ENCODE measurements at regions of chr1 and their contacts with region 1.

Region 1: DNA sequence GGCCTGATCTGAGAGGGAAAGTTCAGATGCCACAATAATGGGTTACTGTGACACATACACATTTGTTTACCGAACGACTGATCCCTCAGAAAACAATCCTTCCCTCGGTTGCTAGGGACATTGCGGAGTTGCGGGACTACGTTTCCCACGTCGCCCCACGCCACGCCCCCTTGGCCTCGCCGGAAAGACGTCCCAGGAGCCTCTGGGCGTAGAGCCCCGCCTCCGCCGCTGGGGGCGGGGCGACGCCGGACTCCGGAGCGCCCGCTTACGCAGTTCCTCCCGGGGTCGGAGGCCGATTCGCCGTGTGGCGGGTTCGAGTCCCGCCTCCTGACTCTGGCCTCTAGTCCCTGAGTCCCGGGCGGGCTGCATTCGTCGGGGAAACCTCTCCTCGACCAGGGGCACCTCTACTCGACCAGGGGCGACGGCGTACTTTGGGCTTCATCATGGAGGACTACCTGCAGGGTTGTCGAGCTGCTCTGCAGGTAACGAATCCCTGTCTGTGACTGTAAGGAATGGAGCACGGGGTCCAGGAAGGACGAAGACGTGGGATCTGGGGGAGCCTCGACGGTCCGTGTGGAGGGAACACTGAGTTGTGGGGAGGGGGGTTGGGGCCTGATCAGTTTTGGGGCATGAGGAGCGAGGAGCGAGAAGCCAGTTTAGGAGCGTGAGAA is at the start of gene PRUNE1:
- DNase-seq: peak; percentile 95
- H3K4me3 ChIP-seq: peak within 1 kb of the TSS; percentile 89
- H3K27ac ChIP-seq: peak within 1 kb of the TSS; percentile 68
- H3K4me1 ChIP-seq: peaks cover 52% of the 10 kb centered on the region
- H3K27me3 ChIP-seq: no peaks in the 10 kb centered on the region
- CTCF ChIP-seq: no peak
- total RNA-seq, gene PRUNE1: 26.6 and 30.7 TPM in 2 replicates

Region 2: DNA sequence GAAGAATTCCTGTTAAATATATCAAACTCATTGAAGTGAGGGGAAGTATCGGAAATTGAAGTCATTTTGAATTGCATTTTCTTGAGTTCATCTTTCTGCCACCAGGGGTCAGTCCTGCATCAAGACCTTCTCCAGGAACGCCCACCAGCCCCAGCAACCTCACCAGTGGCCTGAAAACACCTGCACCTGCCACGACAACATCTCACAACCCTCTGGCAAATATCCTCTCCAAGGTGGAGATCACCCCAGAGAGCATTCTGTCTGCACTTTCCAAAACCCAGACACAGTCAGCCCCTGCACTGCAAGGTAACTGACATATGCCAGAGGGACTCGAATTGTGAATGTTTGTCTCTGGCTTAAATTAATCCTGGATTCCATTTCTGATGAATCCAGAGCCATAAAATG is 543.9 kb before region 1 on chr1:
- CTCF ChIA-PET with region 1: no interaction called
- POLR2A ChIA-PET with region 1: no interaction called
- intact Hi-C with region 1: loop called (anchors 5 kb)
- DNase-seq: peak; percentile 35 to 49
- H3K4me3 ChIP-seq: no peak overlapping the region
- H3K27ac ChIP-seq: no peak overlapping the region
- H3K4me1 ChIP-seq: no peaks in the 10 kb centered on the region
- H3K27me3 ChIP-seq: no peaks in the 10 kb centered on the region
- CTCF ChIP-seq: peak; percentile 83

Region 3: DNA sequence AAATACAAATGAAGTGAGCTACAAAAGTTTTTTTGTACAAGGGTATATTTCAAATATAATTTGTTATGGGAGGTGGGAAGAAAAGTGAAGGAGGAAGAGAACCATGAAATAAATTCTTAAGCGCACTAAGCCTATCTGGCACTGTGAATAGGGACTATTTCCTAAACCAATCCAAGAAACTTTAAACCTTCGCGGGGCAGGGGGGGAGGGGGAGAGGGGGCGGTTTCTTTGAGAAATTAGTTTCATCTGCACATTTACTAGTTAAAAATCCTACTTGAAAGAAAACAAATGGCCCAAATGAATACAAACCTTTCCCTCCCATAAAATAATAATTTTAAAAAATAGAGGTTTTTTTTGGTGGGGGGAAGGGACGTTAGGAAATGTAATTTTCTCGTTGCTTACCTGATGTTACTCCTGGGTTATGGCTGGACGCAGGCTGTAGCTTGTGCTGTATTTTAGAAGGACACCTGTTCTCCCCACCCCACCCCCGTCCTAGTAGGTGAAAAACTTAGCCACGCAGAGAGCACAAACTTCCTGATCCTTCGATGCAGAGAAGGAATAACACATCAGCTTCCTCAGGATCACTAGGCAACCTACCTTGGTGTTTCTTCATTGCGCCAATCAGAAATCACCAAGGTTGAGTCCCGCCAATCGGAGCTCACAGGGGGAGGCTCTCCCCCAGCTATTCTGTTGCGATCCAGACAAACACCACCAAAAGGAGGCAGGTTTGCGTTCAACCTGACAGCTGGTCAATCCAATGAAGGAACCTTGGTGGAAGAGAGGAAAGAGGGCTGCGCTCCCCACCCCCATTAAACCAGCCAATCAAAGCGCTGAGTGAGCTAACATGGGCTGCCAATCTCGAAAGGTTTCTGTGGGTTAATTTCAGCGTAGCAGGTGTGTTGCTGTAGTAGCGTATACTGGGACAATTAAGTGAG is 311.5 kb before region 1 on chr1 and contains the start of gene GOLPH3L:
- CTCF ChIA-PET with region 1: no interaction called
- POLR2A ChIA-PET with region 1: interaction called, 16 read pairs
- intact Hi-C with region 1: no loop called
- DNase-seq: peak; percentile 95 to 99
- H3K4me3 ChIP-seq: peak within 1 kb of the TSS; percentile 83
- H3K27ac ChIP-seq: peak within 1 kb of the TSS; percentile 40
- H3K4me1 ChIP-seq: peaks cover 10% of the 10 kb centered on the region
- H3K27me3 ChIP-seq: no peaks in the 10 kb centered on the region
- CTCF ChIP-seq: no peak
- total RNA-seq, gene GOLPH3L: 36.5 and 52.7 TPM in 2 replicates

Region 4: GRCh38 chr1:151047925-151048645 is 39.8 kb after region 1 on chr1:
- CTCF ChIA-PET with region 1: no interaction called
- POLR2A ChIA-PET with region 1: interaction called, 4 read pairs
- intact Hi-C with region 1: loop called (anchors 1 kb)
- DNase-seq: peak; percentile 57 to 63
- H3K4me3 ChIP-seq: peak overlapping the region; percentile 66
- H3K27ac ChIP-seq: peak overlapping the region; percentile 9
- H3K4me1 ChIP-seq: peaks cover 5% of the 10 kb centered on the region
- H3K27me3 ChIP-seq: no peaks in the 10 kb centered on the region
- CTCF ChIP-seq: no peak; the same call in 1 of the 2 replicates

Region 5: GRCh38 chr1:151059078-151059907 is 51.0 kb after region 1 on chr1 and contains the start of gene CDC42SE1:
- CTCF ChIA-PET with region 1: interaction called, 10 read pairs
- POLR2A ChIA-PET with region 1: interaction called, 3 read pairs
- intact Hi-C with region 1: loop called (anchors 1 kb)
- DNase-seq: peak; percentile 59 to 74
- H3K4me3 ChIP-seq: peak within 1 kb of the TSS; percentile 82
- H3K27ac ChIP-seq: no peak within 1 kb of the TSS
- H3K4me1 ChIP-seq: peaks cover 43% of the 10 kb centered on the region
- H3K27me3 ChIP-seq: no peaks in the 10 kb centered on the region
- CTCF ChIP-seq: peak; percentile 72
- total RNA-seq, gene CDC42SE1: 59.4 and 62.8 TPM in 2 replicates

Region 6: GRCh38 chr1:151070474-151071276 is 62.4 kb after region 1 on chr1 and contains the start of gene GABPB2:
- CTCF ChIA-PET with region 1: no interaction called
- POLR2A ChIA-PET with region 1: interaction called, 10 read pairs
- intact Hi-C with region 1: no loop called
- DNase-seq: peak; percentile 78 to 85
- H3K4me3 ChIP-seq: peak within 1 kb of the TSS; percentile 84
- H3K27ac ChIP-seq: peak within 1 kb of the TSS; percentile 89
- H3K4me1 ChIP-seq: peaks cover 17% of the 10 kb centered on the region
- H3K27me3 ChIP-seq: no peaks in the 10 kb centered on the region
- CTCF ChIP-seq: peak; percentile 87
- total RNA-seq, gene GABPB2: 6.4 and 6.6 TPM in 2 replicates

Region 7: GRCh38 chr1:151106894-151107293 is 98.6 kb after region 1 on chr1:
- CTCF ChIA-PET with region 1: no interaction called
- POLR2A ChIA-PET with region 1: no interaction called
- intact Hi-C with region 1: no loop called
- DNase-seq: no peak
- H3K4me3 ChIP-seq: no peak overlapping the region
- H3K27ac ChIP-seq: no peak overlapping the region
- H3K4me1 ChIP-seq: no peaks in the 10 kb centered on the region
- H3K27me3 ChIP-seq: no peaks in the 10 kb centered on the region
- CTCF ChIP-seq: no peak

Region 8: DNA sequence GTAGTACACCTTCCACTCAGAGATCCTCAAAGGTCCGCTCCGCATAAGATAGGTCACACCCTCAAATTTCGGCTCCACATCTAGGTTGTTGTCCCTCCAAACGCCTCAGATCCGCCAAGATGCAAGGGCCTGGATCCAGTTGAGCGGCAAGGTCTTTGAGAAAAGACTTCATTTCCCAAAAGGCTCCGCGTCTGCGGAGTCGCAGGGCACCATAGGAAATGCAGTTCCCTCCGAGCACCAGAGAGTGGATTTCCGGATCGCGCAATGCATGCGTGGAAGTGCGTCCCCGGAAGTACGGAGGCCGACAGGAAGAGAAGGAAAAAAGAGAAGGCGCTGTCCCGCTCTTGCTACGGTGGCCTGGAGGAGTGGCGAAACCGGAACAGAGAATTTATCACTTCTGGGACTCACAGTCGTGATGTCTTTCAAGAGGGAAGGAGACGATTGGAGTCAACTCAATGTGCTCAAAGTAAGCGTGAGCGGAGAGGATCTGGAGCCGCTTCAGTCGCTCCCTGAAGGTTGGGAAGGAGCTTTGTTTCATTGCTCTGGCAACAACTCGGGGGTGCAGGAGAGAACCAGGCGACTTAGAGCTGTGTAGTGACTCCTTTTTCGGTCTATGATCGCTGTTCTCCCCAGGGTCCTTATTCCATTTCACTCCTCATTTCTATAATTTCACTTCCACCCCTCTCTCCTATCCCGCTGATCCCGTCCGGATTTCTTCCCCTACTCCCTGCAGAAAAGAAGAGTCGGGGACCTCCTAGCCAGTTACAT is 157.6 kb after region 1 on chr1 and contains the starts of genes LYSMD1 and SCNM1:
- CTCF ChIA-PET with region 1: no interaction called
- POLR2A ChIA-PET with region 1: no interaction called
- intact Hi-C with region 1: loop called (anchors 5 kb)
- DNase-seq: peak; percentile 94 to 96
- H3K4me3 ChIP-seq: peak within 1 kb of the TSS; percentile 64
- H3K27ac ChIP-seq: peak within 1 kb of the TSS; percentile 66
- H3K4me1 ChIP-seq: peaks cover 15% of the 10 kb centered on the region; the same call in 1 of the 2 replicates
- H3K27me3 ChIP-seq: no peaks in the 10 kb centered on the region
- CTCF ChIP-seq: no peak
- total RNA-seq, gene LYSMD1: 7.6 and 12.8 TPM in 2 replicates
- total RNA-seq, gene SCNM1: 42.5 and 47.7 TPM in 2 replicates

Measured in PC-9 (cell line).